ENCODE measurements at regions of chr3 and their contacts with region 1.

Region 1: DNA sequence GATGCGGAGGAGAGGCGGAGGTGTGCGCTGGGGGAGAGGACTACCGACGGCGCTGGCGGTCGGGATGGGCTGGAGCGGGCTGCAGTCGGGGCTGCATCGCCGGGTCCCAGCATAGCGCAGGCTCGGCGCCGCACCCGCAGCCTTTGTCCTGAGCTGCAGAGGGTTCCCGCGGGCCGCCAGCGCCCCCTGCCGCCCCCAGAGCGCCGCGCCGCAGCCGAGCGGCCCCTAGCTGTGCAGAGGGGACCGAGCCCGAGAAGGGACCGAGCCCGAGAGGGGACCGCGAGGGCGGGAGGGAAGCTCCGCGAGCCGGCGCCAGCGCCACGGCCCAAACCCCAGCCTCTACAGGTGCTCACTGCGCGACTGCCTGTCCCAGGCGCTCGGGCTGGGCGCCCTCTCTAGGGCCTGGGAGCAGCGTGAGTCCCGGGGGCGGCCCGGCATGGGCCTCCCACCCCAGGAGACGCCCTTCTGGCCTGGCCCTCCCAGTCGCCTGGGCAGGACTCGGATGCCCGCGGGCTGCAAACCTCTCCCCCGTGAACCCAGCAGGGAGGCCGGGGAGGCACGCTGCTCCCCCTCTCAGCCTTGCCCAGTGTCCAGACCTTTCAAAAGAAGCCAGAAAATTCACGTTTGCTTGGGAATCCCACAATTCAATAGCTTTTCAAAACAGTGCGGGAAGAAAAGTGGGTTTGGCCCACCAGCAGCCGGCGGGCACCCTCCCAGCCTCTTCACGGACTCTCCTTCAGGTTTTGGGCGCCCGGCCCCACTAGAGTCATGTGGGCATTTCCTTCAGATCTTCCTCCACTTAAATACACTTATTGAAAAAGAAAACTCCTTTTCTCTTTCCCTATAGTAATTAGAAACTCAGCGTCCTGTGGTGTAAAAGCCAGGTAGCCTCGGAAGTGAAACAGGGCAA is 134.7 kb downstream of the TPRA1 start:
- DNase-seq: peak; percentile 70 to 98 (median 80)

Region 2: DNA sequence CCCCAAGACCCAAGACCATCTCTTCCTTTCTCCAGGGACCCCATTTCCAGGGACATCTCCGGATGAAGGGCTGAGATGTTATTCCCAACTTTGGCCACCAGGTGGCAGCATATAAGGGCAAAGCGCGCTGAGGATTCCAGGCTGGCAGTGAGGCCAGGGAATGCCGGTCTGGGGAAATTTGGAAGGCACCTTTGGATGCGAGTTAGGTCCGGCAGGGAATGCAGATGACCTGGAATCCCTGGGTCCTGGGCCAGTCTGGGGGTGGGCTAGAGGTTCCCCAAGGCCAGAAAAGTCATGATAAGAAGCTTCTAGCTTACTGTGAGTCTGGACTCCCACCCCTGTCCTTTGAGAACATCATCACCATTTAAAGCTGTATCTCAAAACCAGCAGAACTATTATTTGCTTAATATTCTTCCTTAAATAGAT is 933.4 kb before region 1 on chr3:
- intact Hi-C with region 1: loop called (anchors 5 kb)
- DNase-seq: peak; percentile 38 to 94 (median 70)

Region 3: GRCh38 chr3:126679318-126679751 is 776.5 kb before region 1 on chr3:
- intact Hi-C with region 1: loop called (anchors 1 kb)
- DNase-seq: peak; percentile 76 to 98 (median 88)

Region 4: GRCh38 chr3:126752303-126752842 is 703.4 kb before region 1 on chr3:
- intact Hi-C with region 1: loop called (anchors 1 kb)
- DNase-seq: peak; percentile 60 to 97 (median 85)

Region 5: GRCh38 chr3:126870608-126871210 is 585.1 kb before region 1 on chr3:
- intact Hi-C with region 1: no loop called
- DNase-seq: peak in 3 of 10 donors; percentile 38 to 85 (median 46)

Region 6: DNA sequence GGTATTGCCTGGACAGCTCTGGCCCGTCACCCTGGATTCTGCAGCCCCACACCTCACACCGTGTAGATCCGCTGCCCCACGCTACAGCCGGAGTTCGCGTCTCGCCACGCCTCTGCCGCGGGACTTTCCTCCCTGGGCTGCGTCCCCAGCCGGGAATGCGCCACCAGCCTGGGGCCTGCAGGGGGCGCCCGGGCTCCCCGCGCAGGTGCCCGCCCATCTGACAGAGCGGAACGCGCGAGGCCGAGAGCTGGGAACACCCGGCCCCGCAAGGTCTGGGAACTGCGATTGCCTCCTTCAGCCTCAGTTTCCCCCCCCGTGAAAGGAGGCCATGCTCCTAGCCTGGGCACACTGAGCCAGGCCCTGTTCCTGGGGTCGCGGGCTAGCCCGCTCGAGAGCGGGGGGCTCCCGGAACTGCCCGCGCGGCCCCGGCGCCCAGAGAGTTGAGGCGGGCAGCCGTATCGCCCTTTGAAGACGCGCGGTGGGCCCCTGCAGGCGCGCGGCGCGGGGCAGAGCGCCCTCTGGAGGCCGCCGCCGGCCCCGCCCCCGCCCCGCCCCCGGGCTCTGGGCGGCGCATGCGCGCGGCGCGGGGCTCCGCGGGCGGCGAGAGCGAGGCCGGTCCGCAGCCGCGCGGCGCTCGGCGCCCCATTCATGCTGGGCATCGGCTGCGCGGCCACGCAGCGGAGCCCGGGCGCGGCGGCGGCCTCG is 473.2 kb before region 1 on chr3 and contains the start of gene PLXNA1:
- intact Hi-C with region 1: loop called (anchors 2 kb)
- DNase-seq: peak in 9 of 10 donors; percentile 35 to 96 (median 67)

Region 7: DNA sequence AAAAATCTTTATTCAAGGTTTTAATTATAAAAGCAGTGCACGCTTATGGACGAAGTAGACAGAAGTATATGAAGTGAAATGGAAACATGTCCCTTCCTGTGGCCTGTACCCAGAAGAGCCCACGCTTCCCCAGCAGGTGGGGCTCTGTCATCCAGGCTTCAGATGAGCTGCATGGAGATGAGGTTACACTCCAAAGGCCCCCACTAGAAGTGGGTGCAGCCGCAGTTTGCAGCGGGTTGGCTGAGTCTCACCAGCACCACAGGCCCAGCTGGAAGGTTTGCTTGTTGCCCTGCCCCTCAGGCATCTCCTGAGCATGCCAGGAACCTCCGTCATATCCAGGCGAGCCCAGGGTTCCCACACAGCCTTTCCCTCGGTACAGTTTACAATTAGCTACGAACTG is 201.1 kb before region 1 on chr3:
- intact Hi-C with region 1: loop called (anchors 10 kb)
- DNase-seq: no peak

Region 8: DNA sequence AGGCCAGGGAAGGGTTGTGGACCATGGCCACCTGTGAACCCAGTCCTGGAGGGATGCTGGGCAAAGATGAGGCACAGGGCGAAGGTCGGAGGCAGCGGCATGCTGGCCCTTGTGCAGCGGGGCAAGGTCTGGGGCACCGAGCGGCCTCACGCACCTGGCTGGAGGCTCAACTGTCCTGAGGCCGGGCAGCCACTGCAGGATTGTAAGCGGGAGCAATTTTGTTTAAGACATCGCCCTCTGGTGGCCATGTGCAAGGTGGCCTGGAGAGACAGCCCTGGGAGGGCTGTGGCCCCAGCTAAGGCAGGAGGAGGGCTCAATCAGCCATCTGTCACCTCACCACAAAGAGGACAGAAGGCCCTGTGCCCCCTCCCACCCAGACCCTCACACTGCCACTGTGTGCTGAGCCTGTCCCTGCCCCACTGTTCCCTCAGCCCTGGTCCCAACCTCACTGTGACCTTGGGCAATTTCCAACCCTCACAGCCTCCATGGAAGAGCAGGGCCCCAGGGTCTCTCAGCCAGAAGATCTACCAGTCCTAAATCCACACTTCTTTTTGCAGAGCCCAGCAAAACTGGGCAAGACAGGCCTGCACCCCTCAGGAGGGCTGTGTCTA is 88.5 kb after region 1 on chr3:
- intact Hi-C with region 1: loop called (anchors 5 kb)
- DNase-seq: peak in 8 of 10 donors; percentile 63 to 94 (median 76)